ENCODE measurements at regions of chr5 and their contacts with region 1.

Region 1: DNA sequence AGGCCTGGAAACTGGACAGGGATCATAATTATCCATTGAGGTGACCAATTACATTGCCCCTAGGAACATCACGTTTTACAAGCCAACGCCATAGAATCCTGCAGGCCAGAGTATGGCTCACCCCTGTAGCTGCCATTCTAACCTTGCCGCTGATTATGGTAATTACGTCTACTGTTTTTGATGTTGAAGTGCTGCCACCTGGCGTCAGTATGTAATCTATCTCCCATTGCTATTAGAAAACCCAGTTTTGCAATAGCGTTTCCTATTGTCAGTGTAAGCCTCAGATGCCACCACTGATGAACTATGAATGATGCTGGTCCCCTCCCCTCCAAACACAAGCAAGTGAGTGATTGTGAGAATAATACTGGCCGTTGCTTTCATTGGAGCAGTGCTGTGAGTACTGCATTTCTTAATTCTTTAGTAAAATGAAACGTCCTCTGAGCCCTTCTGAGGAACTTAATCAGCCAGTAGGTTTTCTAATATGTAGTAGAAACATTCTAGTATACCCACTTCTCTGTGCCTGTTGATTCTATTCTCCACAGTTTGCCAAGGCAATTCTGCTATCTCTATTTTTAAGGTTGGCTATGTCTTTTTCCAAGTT is 100.5 kb upstream of the NMUR2 start:
- DNase-seq: no peak
- ATAC-seq: peak; percentile 94
- H3K4me3 ChIP-seq: no peak overlapping the region
- H3K27ac ChIP-seq: no peak overlapping the region
- H3K4me1 ChIP-seq: no peaks in the 10 kb centered on the region
- H3K27me3 ChIP-seq: no peaks in the 10 kb centered on the region
- CTCF ChIP-seq: peak; percentile 61 to 69 (median 67)
- EP300 ChIP-seq: no peak
- POLR2A ChIP-seq: no peak
- RAD21 ChIP-seq: peak; percentile 77

Region 2: DNA sequence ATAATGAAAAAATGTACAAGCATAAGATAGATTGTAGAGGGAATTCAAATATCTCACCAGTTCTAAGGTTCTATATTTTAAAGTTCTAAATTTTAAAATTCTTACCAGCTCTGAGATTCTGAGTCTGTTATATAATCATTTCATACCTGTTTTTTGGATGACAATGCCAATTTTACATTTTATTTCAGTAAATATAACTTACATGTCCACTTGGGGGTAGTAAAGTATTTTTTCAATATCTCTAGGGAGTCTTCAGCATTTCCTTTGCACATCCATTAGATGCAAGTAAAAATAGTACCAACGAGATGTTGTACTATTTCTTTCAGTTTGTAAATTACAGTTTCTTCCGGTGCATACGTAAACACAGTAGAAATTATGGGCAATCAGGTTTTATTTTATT is 126.2 kb before region 1 on chr5:
- CTCF ChIA-PET with region 1: interaction called, 4 read pairs
- POLR2A ChIA-PET with region 1: no interaction called
- RAD21 ChIA-PET with region 1: no interaction called
- SMC1A ChIA-PET with region 1: no interaction called
- in situ Hi-C with region 1: no loop called
- intact Hi-C with region 1: loop called (anchors 5 kb)
- DNase-seq: no peak
- ATAC-seq: no peak
- H3K4me3 ChIP-seq: no peak overlapping the region
- H3K27ac ChIP-seq: no peak overlapping the region
- H3K4me1 ChIP-seq: no peaks in the 10 kb centered on the region
- H3K27me3 ChIP-seq: no peaks in the 10 kb centered on the region
- CTCF ChIP-seq: no peak; a peak in 1 of 6 replicates
- EP300 ChIP-seq: no peak
- POLR2A ChIP-seq: no peak
- RAD21 ChIP-seq: no peak

Measured in GM12878 (cell line).